BJ (cell line): ENCODE measurements at regions of chr10 and their contacts with region 1.

Region 1: DNA sequence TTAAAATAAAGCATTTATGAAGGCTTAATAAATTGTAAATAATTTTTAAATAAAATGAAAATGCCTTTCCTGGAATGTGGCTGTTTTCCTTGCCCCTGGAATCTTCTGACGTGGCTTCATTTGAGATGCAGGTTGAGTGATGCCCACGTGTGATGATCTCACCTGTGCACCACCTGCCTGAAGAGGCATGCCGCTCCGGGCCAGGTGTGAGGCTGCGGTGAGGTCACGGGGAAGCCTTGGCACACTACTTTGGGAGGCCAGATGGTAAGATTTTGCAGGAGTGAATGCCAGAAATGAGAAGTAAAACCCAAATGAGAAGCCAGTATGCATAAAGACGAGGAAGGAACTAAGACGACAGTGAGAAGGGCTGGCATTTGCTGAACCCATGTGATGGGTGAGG is 36.2 kb downstream of the GOT1 start:
- DNase-seq: no peak
- H3K4me3 ChIP-seq: no peak overlapping the region
- H3K27me3 ChIP-seq: no peaks in the 10 kb centered on the region
- CTCF ChIP-seq: no peak

Region 2: GRCh38 chr10:99372546-99373271 is 21.5 kb before region 1 on chr10:
- CTCF ChIA-PET with region 1: interaction called, 14 read pairs
- POLR2A ChIA-PET with region 1: no interaction called
- DNase-seq: peak; percentile 54
- H3K4me3 ChIP-seq: no peak overlapping the region
- H3K27me3 ChIP-seq: no peaks in the 10 kb centered on the region
- CTCF ChIP-seq: no peak

Region 3: GRCh38 chr10:99430451-99431189 is 36.4 kb after region 1 on chr10 and contains the start of gene GOT1:
- CTCF ChIA-PET with region 1: interaction called, 17 read pairs
- POLR2A ChIA-PET with region 1: no interaction called
- DNase-seq: peak; percentile 99
- H3K4me3 ChIP-seq: peak within 1 kb of the TSS; percentile 81
- H3K27me3 ChIP-seq: no peaks in the 10 kb centered on the region
- CTCF ChIP-seq: no peak
- polyA plus RNA-seq, gene GOT1: 41.4 and 53.3 TPM in 2 replicates

Region 4: DNA sequence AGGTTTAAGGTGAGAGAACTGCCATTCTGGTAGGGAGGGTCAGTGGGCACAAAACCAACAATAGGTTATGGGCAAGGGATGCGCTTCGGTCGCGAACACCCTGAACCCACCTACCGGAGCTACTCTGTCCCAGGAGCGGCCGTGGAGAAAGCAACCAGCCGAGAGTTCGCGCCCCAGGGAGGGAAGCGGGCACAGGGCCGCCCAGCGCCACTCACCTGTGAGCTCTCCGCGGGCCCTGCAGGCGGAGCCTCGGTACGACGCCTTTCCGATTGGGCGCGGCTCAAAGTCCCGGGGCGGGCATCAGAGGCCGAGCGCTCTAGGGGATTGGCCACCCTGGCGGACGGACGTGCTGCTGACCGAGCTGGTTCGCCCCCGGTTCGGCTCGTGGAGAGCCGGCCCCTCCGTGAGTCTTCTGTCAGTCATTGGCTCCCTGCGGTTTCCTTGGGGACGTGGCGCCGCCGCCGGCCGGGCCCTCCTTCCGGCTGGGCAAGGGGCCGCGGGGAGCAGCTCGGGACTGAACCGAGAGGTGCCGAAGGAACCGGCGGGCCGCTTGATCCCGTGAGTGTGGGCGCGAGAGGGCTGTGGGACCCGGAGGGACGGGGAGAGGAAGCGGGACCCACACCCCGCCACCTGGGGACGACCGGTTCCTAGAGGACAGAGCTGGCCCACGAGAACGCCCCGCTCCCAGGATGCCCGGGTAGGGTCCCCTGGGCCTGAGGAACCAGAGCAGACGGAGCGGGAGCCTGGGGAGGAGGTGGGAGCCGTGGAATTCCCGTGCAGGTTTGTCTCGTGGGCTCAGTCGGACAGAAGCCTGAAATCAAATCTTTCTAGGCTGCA is 265.0 kb after region 1 on chr10 and contains the start of gene ENTPD7:
- CTCF ChIA-PET with region 1: no interaction called
- POLR2A ChIA-PET with region 1: interaction called, 20 read pairs
- DNase-seq: peak; percentile 79
- H3K4me3 ChIP-seq: peak within 1 kb of the TSS; percentile 99
- H3K27me3 ChIP-seq: no peaks in the 10 kb centered on the region
- CTCF ChIP-seq: peak; percentile 37; the same call in 1 of the 2 replicates
- polyA plus RNA-seq, gene ENTPD7: 13.6 and 16.4 TPM in 2 replicates

Region 5: GRCh38 chr10:99709480-99710229 is 315.4 kb after region 1 on chr10:
- CTCF ChIA-PET with region 1: no interaction called
- POLR2A ChIA-PET with region 1: no interaction called
- DNase-seq: no peak
- H3K4me3 ChIP-seq: no peak overlapping the region
- H3K27me3 ChIP-seq: no peaks in the 10 kb centered on the region
- CTCF ChIP-seq: no peak